ENCODE measurements at regions of chr3 and their contacts with region 1.

Region 1: GRCh38 chr3:150721285-150722130 is 17.8 kb upstream of the ERICH6 start:
- DNase-seq: no peak
- ATAC-seq: peak; percentile 70

Region 2: DNA sequence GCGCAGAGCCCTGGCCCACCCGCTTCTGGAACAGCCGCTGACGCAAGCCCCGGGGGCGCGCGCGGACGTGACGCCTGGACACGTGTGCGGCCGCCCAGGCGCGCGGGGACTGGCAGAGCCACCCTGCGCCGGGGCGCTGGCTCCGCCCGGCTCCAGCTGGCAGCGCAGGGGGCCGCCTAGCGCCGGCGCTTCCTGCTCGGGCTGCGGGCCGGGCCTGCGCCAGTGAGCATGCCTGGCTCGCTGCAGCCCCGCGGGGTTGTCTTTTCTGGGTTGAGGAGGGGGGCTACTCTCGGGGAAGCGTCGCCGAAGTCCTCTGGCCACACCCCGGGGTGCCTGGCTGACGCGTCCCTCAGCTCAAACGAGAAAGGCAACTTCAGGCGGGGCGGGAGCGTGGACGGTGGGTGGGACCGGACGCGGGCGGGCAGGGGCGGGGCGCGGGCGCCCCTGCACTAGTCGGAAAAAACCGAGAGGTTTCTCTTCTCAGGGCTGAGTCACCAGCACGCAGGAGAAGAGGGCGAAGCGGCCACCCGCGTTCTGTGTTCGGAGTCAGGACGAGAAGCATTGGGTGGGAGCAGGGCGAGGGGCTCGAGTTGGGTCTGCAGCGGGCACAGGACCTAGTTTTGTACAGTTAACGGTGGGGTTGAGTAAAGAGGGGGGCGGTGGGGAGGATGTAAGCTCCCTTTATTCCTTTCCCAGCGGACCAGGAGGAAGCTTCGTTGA is 41.8 kb after region 1 on chr3 and contains the start of gene SIAH2:
- intact Hi-C with region 1: loop called (anchors 5 kb)
- DNase-seq: peak; percentile 97
- ATAC-seq: peak; percentile 91
- total RNA-seq, gene SIAH2: 20.6 TPM

Region 3: GRCh38 chr3:150870396-150870795 is 148.9 kb after region 1 on chr3:
- intact Hi-C with region 1: loop called (anchors 1 kb)
- DNase-seq: no peak
- ATAC-seq: no peak

Measured in Right ventricle myocardium inferior (tissue), 1 donor.